ENCODE measurements at regions of chr15 and their contacts with region 1.

Region 1: GRCh38 chr15:55649054-55649423 is 60.9 kb upstream of the PYGO1 start:
- DNase-seq: no peak

Region 2: DNA sequence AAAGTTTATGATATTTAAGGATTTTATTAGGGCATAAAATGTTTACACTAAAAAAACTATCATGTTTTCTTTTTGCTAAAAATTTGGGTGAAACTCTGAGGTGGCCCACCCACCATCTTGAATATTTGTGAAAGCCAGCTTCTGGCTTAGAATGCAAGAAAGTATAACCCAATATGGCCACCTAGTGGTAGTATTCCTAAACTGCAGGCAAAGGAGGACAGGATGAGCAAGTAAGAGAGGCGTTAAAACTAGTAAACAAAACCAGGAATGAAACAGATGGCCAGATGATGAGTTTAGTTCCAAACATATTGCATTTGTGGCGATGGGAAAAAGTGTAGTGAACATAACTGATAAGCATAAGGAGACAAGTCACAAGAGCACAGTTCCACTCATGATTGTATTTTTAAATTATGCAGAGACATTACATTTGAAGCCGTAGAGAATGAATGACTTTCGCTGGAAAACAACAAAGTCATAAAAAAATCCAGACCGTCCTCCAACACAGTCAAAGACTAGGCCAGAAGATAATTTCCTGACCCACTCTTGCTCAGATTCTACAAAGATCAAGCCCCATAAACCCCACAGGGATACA is 197.2 kb after region 1 on chr15:
- intact Hi-C with region 1: loop called (anchors 2 kb)
- DNase-seq: peak in 2 of 10 donors; percentile 5 to 24

Measured in posterior cingulate gyrus (tissue), 11 donors.